Ovary (tissue), 10 donors: ENCODE measurements at regions of chr22 and their contacts with region 1.

Region 1: GRCh38 chr22:37676736-37677492 is 1.5 kb downstream of the LGALS1 start:
- DNase-seq: peak; percentile 93 to 95 (median 94)
- H3K4me3 ChIP-seq: peak overlapping the region; percentile 58
- H3K27ac ChIP-seq: peak overlapping the region; percentile 47 to 94
- H3K4me1 ChIP-seq: peaks cover 8% of the 10 kb centered on the region
- H3K27me3 ChIP-seq: no peaks in the 10 kb centered on the region
- CTCF ChIP-seq: no peak
- EP300 ChIP-seq: no peak
- POLR2A ChIP-seq: no peak

Region 2: DNA sequence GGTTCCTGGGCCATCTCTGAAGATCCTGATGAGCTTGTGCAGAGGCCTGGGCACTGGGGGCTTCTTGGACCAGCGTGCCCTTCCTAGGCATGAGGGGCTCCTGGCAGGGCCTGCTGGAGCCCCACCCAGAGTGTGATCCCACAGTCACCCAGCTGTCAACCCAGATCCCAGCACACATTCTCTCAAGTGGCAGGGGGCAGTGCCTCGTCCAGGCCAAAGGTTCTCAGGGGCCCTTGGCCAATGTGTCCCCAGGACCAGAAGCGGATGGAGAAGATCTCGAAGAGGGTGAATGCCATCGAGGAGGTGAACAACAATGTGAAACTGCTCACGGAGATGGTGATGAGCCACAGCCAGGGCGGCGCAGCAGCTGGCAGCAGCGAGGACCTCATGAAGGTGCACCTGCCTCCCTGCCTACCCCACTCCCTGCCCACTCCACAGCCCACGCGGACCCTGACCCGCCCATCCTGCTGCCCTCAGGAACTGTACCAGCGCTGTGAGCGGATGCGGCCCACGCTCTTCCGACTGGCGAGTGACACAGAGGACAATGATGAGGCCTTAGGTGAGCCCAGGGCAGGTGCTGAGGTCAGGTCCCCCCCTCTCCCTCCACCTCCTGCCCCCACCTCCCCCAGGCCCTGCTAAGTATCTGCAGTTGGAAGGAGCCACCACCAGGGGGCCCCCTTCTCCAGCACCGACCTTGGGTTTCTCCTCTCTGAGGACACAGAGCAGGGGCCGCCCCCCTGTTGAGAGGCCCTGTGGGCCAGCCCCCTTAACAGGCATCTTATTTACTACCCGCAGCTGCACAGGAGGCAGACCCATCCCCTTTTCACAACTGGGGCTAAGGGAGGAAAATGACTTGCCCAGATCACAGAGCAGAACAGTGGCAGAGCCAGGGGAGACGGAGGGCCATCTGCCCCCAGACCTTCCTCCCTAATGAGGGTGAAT is 53.6 kb before region 1 on chr22:
- intact Hi-C with region 1: loop called in 2 of 4 experiments (anchors 5 to 10 kb)
- DNase-seq: peak; percentile 59 to 84 (median 74)
- H3K4me3 ChIP-seq: no peak overlapping the region
- H3K27ac ChIP-seq: peak overlapping the region in 1 of 2 donors; percentile 18
- H3K4me1 ChIP-seq: peaks cover 4% of the 10 kb centered on the region
- H3K27me3 ChIP-seq: no peaks in the 10 kb centered on the region
- CTCF ChIP-seq: peak; percentile 39 to 82 (median 62)
- EP300 ChIP-seq: no peak
- POLR2A ChIP-seq: no peak

Region 3: DNA sequence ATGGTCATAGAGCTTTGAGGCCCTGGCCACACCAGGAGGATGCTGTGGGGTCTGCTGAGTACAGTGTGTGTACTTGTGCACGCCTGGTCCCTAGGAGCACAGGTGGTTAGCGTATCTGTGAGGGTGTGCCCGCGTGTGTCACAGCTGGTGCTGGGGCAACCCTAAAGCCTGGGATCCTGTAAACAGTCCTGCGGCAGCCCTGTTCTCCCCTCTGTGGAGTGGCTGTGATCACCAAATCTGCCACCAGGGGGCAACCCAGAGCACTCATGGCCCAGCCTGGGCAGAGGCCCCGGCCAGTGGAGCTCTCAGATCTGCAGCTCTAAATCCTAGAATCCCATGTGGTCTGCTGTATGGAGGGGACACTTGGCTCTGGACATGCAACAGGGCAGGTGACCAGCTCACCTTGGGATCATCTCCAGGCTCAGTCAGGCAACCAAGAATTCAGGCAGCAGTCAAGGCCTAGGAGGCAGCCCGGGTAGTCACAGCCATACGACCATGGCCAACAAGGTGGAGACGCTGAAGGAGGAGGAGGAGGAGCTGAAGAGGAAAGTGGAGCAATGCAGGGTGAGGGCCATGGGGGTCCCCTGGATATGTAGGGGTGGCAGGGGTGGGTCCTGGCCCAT is 33.6 kb before region 1 on chr22:
- intact Hi-C with region 1: loop called in 3 of 4 experiments (anchors 5 kb)
- DNase-seq: peak; percentile 78 to 93 (median 89)
- H3K4me3 ChIP-seq: no peak overlapping the region
- H3K27ac ChIP-seq: no peak overlapping the region
- H3K4me1 ChIP-seq: peaks cover 2% of the 10 kb centered on the region
- H3K27me3 ChIP-seq: no peaks in the 10 kb centered on the region
- CTCF ChIP-seq: peak; percentile 89 to 94 (median 94)
- EP300 ChIP-seq: no peak
- POLR2A ChIP-seq: no peak

Region 4: DNA sequence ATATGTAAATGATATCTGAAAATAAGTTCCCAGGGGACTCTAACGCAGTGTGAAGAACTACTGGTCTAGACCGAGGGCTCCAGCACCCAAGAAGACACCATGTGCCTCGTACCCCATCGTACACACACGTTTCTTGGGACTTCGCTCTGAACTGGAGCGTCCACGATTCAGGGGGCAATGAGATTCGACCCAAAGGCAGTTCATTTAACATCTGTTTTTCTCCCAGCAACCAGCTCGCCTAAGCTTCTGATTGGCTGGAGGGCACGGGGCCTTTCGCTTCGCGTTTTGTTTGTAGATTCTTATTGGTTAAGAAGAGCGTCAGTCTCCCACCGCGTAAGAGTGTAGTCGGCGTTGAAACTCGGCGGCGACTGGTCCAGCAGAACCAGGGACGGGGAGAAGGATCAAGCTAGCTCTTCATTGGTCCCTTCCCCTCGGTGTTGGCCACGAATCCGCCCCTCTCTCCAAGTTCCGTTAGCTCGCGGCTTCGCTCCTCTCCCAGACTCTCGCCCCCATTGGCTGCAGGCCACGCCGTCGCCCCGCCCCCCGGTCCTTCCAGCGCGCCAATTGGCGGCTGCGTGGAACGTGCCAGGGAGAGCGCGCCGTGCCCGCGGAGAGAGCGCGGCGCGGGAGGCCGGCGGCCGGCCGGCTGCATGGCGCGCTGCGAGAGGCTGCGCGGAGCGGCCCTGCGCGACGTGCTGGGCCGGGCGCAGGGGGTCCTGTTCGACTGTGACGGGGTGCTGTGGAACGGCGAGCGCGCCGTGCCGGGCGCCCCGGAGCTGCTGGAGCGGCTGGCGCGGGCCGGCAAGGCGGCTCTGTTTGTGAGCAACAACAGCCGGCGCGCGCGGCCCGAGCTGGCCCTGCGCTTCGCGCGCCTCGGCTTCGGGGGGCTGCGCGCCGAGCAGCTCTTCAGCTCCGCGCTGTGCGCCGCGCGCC is 18.5 kb before region 1 on chr22 and contains the start of gene PDXP:
- intact Hi-C with region 1: loop called in 1 of 4 experiments (anchors 2 kb)
- DNase-seq: peak; percentile 99 to 100 (median 100)
- H3K4me3 ChIP-seq: peak within 1 kb of the TSS; percentile 62
- H3K27ac ChIP-seq: peak within 1 kb of the TSS in 1 of 2 donors; percentile 71
- H3K4me1 ChIP-seq: peaks cover 8% of the 10 kb centered on the region
- H3K27me3 ChIP-seq: no peaks in the 10 kb centered on the region
- CTCF ChIP-seq: no peak
- EP300 ChIP-seq: no peak
- POLR2A ChIP-seq: peak; percentile 74
- total RNA-seq, gene PDXP: 9.1 to 15.9 (median 12.7) TPM

Region 5: GRCh38 chr22:37745548-37746365 is 68.8 kb after region 1 on chr22:
- intact Hi-C with region 1: loop called in 2 of 4 experiments (anchors 5 kb)
- DNase-seq: peak; percentile 91 to 93 (median 92)
- H3K4me3 ChIP-seq: peak overlapping the region; percentile 84
- H3K27ac ChIP-seq: peak overlapping the region; percentile 87 to 93
- H3K4me1 ChIP-seq: peaks cover 32% of the 10 kb centered on the region
- H3K27me3 ChIP-seq: no peaks in the 10 kb centered on the region
- CTCF ChIP-seq: no peak
- EP300 ChIP-seq: no peak
- POLR2A ChIP-seq: no peak

Region 6: DNA sequence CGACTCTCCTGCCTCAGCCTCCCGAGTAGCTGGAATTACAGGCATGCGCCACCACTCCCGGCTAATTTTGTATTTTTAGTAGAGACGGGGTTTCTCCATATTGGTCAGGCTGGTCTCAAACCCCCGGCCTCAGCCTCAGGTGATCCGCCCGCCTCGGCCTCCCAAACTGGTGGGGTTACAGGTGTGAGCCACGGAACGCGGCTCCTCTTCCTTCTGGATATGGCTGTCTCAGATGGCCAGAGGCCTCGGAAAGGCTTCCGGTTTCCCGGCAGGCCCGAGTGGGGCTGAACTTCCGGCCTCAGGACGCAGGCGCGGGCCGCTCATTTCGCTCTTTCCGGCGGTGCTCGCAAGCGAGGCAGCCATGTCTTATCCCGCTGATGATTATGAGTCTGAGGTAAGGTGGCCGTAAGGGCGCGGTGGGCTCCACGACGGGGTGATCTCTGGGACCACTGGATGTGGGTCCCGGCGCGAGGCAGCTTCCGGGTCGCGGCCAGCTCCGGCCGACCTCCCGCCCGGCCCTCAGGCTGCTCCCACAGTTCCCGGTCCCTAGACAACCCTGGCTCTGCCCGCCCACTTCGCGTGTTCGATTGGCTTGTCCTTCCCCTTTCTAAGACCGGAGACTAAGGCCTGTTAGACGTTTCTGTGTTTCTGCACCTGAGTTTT is 172.3 kb after region 1 on chr22 and contains the start of gene EIF3L:
- intact Hi-C with region 1: no loop called
- DNase-seq: peak; percentile 85 to 92 (median 87)
- H3K4me3 ChIP-seq: peak within 1 kb of the TSS; percentile 59
- H3K27ac ChIP-seq: peak within 1 kb of the TSS; percentile 47 to 66
- H3K4me1 ChIP-seq: peaks cover 5% of the 10 kb centered on the region
- H3K27me3 ChIP-seq: no peaks in the 10 kb centered on the region
- CTCF ChIP-seq: no peak
- EP300 ChIP-seq: peak; percentile 14
- POLR2A ChIP-seq: peak; percentile 86
- total RNA-seq, gene EIF3L: 534 to 1,344 (median 896) TPM